CD14-positive monocyte (primary cell): ENCODE measurements at regions of chr10 and their contacts with region 1.

Region 1: DNA sequence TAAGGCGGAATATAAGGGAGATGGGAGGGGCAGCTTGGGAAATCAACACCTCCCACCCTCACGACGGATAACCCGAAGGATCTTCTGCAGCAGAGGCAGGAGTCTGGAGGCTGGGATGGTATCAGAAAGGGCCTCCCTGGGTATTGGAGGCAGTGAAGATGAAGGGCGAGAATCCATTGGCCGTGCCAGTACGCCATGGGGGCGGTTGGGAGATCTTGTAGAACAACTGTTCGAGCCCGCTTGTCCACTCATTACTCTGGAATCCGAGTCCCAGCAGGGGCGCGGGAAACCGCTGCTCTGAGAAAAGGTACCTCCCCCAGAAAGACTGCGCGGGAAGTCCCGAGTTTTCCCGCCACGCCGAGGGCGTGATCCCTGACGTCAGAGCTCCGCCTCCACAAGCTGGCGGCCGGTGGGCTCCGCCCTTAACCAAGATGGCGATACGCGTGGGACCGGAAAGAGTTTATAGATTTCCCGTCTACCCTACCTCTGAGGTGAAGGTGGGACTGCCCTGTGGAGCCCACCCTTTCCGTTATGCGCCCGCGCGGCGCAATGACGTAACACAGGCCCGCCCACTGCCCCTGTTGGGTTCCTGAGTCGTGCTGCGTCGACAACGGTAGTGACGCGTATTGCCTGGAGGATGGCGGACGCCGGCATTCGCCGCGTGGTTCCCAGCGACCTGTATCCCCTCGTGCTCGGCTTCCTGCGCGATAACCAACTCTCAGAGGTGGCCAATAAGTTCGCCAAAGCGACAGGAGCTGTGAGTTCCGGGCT is at the start of gene NOLC1:
- DNase-seq: peak; percentile 97 to 99 (median 99)
- H3K4me3 ChIP-seq: peak within 1 kb of the TSS; percentile 73 to 93 (median 75)
- H3K4me3 Mint-ChIP-seq: peak within 1 kb of the TSS; percentile 87 to 95
- H3K27ac ChIP-seq: peak within 1 kb of the TSS; percentile 78 to 92
- H3K27ac Mint-ChIP-seq: peak within 1 kb of the TSS; percentile 90 to 96 (median 94)
- H3K4me1 ChIP-seq: peaks cover 13 to 19% of the 10 kb centered on the region in 2 donors
- H3K4me1 Mint-ChIP-seq: peaks cover 18% of the 10 kb centered on the region
- H3K27me3 ChIP-seq: no peaks in the 10 kb centered on the region
- H3K27me3 Mint-ChIP-seq: peaks cover 0 to 4% (median 0%) of the 10 kb centered on the region in 3 donors
- CTCF ChIP-seq: no peak
- polyA plus RNA-seq, gene NOLC1: 10.0 to 32.1 (median 19.3) TPM

Region 2: GRCh38 chr10:101830322-101831168 is 321.4 kb before region 1 on chr10:
- intact Hi-C with region 1: loop called in 1 of 2 experiments (anchors 5 kb)
- DNase-seq: peak; percentile 96 to 99 (median 98)
- H3K4me3 ChIP-seq: peak overlapping the region; percentile 43 to 76 (median 46)
- H3K4me3 Mint-ChIP-seq: peak overlapping the region; percentile 69 to 90
- H3K27ac ChIP-seq: peak overlapping the region; percentile 44 to 86
- H3K27ac Mint-ChIP-seq: peak overlapping the region; percentile 74 to 92 (median 87)
- H3K4me1 ChIP-seq: peaks cover 51 to 54% of the 10 kb centered on the region in 2 donors
- H3K4me1 Mint-ChIP-seq: peaks cover 52% of the 10 kb centered on the region
- H3K27me3 ChIP-seq: no peaks in the 10 kb centered on the region
- H3K27me3 Mint-ChIP-seq: peaks cover 0 to 2% (median 0%) of the 10 kb centered on the region in 3 donors
- CTCF ChIP-seq: no peak